Activated CD4-positive, alpha-beta memory T cell treated with anti-CD3 and anti-CD28 coated beads for 36 hours (primary cell): ENCODE measurements at regions of chr7 and their contacts with region 1.

Region 1: DNA sequence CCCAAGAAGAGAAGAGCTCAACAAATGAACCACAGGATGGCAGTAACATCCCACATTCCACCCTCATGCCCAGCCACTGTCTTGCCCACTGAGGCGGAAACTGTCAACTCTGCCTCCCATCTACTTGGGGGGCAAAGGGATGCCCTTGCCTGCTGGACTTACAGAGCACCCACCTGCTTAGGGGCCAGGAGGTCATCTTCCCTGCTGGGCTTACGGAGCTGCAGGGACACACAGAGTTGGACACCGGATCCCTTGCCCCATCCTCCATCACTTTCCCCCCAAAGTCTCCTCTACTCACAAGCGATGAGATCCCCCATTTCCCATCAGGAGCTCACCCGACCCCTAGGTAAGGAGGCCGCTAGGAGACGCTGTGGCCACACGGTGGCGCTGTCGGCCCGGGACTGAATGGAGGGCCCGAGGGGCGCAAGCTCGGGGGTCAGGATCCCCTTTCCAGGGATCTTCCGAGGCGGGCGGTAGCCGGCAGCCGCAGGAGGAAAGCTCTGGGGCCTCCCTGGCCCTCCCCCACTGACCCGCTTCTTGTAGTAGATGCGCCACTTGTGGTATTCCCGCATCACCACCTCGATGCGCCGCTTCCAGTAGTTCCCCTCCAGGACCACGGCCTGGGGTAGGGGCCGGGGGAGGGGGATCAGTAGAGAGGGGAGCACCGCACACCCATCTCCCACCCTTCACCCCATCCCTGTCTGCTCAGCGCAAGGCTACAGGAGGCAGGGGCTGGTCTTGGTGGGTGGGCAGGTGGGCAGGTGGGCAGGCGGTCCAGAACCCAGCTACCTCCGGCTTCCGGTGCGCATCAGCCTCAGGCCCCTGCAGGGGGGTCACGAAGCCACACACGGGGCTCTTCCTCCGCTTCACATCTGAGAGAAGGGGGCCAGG is 17.3 kb downstream of the MLXIPL start:
- DNase-seq: peak; percentile 64
- H3K4me3 Mint-ChIP-seq: no peak overlapping the region
- H3K27ac Mint-ChIP-seq: no peak overlapping the region
- H3K4me1 Mint-ChIP-seq: no peaks in the 10 kb centered on the region
- H3K27me3 Mint-ChIP-seq: peaks cover 19% of the 10 kb centered on the region

Region 2: GRCh38 chr7:73308665-73309214 is 298.3 kb before region 1 on chr7 and contains the start of gene NSUN5:
- CTCF ChIA-PET with region 1: no interaction called
- POLR2A ChIA-PET with region 1: no interaction called
- intact Hi-C with region 1: no loop called
- DNase-seq: peak; percentile 96
- H3K4me3 Mint-ChIP-seq: peak within 1 kb of the TSS; percentile 98
- H3K27ac Mint-ChIP-seq: peak within 1 kb of the TSS; percentile 88
- H3K4me1 Mint-ChIP-seq: peaks cover 26% of the 10 kb centered on the region
- H3K27me3 Mint-ChIP-seq: no peaks in the 10 kb centered on the region
- total RNA-seq, gene NSUN5: 51.2 to 55.5 TPM

Region 3: DNA sequence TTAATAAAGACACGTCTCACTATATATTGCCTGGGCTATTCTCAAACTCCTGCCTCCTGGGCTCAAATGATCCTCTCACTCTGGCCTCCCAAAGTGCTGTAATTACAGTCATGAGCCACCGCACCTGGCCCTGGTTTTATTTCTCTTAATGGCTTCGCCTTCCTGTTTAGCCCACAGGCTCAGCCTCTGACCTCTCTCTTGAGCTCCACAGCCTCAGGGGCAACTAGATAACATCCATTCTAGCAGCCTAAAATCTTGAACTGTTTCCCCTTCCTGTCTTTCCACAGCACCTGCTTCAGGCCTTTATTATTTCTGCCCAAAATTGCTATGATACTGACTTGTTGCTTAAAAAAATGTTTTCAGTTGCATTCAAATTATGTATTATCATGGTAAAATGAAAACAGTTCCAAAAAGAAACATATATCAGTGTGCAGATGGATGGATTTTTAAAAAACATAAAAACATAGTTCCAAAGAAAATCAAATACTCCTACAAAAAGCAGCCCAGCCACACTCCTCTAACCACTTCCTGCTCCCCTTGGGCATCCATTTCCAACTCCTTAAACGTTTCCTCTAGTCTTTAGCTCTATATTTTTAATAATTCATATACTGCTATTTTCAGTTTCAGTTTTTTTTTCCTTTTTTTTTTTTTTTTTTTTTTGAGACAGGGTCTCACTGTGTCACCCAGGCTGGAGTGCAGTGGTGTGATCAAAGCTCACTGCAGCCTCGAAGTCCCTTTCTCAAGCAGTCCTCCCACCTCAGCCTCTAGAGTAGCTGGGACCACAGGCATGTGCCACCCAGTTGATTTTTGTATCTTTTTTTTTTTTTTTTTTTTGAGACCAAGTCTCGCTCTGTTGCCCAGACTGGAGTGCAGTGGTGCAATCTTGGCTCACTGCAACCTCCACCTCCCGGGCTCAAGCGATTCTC is 79.9 kb before region 1 on chr7:
- CTCF ChIA-PET with region 1: no interaction called
- POLR2A ChIA-PET with region 1: no interaction called
- intact Hi-C with region 1: no loop called
- DNase-seq: no peak
- H3K4me3 Mint-ChIP-seq: no peak overlapping the region
- H3K27ac Mint-ChIP-seq: peak overlapping the region; percentile 71
- H3K4me1 Mint-ChIP-seq: peaks cover 31% of the 10 kb centered on the region
- H3K27me3 Mint-ChIP-seq: no peaks in the 10 kb centered on the region

Region 4: DNA sequence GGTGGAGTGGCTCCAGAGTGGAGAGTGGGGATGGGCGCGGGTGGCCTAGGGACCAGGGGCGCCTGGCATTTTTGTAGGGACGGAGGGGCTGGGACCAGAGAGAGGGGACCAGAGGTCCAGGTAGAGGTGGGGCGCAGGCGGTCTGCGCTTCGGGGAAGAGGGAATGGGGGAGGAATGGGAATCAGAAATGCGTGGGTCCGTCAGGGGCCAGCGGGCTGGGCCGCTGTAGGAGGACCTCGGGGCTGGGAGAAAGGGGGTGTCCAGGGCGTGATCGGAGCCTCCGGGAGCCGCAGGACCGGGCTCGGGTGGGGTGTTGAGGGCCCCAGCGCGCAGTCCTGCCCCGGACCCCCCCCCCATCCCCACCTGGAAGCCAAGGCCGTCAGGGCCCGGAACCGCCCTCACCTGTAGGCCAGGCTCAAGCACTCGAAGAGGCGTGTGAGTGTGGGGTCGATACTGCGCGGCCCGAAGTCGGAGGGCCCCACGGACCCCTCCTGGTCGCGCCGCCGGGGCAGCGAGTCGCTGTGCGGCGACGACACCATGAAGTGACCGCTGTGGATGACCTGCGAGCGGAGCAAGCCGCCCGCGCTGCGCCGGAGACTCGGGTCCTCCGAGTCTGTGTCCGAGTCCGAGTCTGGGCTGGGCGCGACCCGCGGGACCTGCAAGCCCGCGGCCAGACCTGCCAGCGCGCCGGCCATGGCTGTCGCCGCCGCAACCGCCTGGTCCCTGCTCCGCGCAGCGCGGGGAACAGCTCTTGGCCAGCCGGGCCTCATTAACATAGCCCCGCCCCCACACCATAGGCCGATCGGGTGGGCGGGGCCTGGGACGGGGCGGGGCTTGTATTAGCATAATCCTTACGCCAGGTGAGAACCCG is 17.0 kb after region 1 on chr7 and contains the start of gene MLXIPL:
- CTCF ChIA-PET with region 1: interaction called, 14 read pairs
- POLR2A ChIA-PET with region 1: no interaction called
- intact Hi-C with region 1: no loop called
- DNase-seq: peak; percentile 74
- H3K4me3 Mint-ChIP-seq: no peak within 1 kb of the TSS
- H3K27ac Mint-ChIP-seq: no peak within 1 kb of the TSS
- H3K4me1 Mint-ChIP-seq: peaks cover 6% of the 10 kb centered on the region
- H3K27me3 Mint-ChIP-seq: peaks cover 37% of the 10 kb centered on the region
- total RNA-seq, gene MLXIPL: not detected

Region 5: DNA sequence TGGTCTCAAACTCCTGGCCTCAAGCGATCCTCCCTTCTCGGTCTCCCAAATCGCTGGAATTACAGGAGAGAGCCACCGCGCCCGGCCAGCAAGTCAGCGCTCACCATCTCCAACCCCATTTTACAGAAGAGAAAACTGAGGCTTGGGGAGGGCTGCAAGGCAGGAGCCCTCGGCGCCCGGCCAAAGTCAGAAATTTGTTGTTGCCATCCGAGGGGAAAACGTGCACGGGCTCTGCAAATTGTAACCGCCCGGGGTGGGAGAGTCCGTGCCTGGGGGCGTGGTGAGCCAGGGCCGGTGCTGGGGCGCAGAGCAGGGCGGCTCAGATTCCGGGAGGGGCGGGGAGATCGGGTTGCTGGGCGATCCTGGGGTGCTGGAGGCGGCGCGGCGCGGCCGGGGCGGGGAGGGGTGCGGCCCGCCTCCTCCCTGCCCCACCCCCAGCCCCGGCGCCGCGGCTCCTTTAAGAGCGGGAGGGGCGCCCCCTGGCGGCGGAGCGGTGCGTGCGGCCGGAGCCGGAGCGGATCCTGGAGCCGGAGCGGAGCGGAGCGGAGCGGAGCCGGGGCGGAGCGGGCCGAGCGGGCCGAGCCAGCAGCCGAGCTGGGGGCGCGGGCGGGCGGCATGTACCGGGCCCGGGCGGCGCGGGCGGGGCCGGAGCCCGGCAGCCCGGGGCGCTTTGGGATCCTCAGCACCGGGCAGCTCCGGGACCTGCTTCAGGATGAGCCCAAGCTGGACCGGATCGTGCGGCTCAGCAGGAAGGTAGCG is 60.5 kb after region 1 on chr7 and contains the start of gene VPS37D:
- CTCF ChIA-PET with region 1: interaction called, 29 read pairs
- POLR2A ChIA-PET with region 1: no interaction called
- intact Hi-C with region 1: loop called (anchors 1 kb)
- DNase-seq: peak; percentile 92
- H3K4me3 Mint-ChIP-seq: peak within 1 kb of the TSS; percentile 62
- H3K27ac Mint-ChIP-seq: no peak within 1 kb of the TSS
- H3K4me1 Mint-ChIP-seq: peaks cover 3% of the 10 kb centered on the region
- H3K27me3 Mint-ChIP-seq: peaks cover 36% of the 10 kb centered on the region
- total RNA-seq, gene VPS37D: 0.22 to 0.26 TPM

Region 6: DNA sequence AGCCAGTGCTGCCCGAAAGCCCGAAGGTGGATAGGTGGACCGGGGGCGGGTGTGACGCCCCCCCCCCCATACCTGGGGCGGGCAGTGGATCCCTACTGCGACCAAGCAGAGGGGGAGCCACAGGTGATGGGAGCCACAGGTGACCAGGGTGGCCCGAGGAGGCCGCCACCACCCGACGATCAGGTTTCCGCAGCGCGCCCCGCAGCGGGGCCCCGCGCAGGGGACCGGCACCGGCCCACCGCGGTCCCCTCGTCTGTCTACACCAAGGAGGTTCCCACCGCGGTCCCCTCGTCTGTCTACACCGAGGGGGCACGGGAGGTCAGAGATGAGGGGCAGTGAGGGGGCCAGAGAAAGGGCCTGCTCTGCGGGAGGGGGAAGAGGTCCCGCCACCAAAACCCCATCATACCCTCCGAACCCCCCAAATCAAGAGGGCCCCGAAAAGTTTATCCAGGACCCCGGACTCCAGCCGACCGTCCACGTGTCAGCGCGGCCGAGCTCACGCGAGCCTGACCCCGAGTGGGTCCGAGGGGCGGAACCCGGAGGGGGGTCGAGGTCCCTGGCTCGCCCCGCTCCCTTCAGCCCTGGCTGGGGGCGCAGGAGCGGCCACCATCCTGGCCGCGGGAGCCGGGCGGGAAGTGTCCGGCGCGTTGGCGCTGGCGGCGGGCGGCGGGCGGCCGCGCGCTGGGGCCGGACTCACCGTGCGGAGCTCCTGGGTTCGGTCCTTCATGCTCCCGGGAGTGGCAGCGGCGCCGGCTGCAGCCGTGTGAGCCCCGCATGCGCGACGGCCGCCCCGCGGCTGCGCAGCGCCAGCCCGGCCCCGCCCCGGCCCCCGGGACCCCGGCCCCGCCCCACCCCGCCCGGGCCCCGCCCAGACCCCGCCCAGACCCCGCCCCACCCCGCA is 112.1 kb after region 1 on chr7 and contains the start of gene STX1A:
- CTCF ChIA-PET with region 1: interaction called, 94 read pairs
- POLR2A ChIA-PET with region 1: no interaction called
- intact Hi-C with region 1: no loop called
- DNase-seq: peak; percentile 81
- H3K4me3 Mint-ChIP-seq: peak within 1 kb of the TSS; percentile 70
- H3K27ac Mint-ChIP-seq: peak within 1 kb of the TSS; percentile 62
- H3K4me1 Mint-ChIP-seq: peaks cover 34% of the 10 kb centered on the region
- H3K27me3 Mint-ChIP-seq: no peaks in the 10 kb centered on the region
- total RNA-seq, gene STX1A: 31.8 to 39.2 TPM

Region 7: GRCh38 chr7:73738612-73739374 is 131.7 kb after region 1 on chr7 and contains the start of gene ABHD11:
- CTCF ChIA-PET with region 1: interaction called, 109 read pairs
- POLR2A ChIA-PET with region 1: no interaction called
- intact Hi-C with region 1: no loop called
- DNase-seq: peak; percentile 99
- H3K4me3 Mint-ChIP-seq: peak within 1 kb of the TSS; percentile 91
- H3K27ac Mint-ChIP-seq: peak within 1 kb of the TSS; percentile 82
- H3K4me1 Mint-ChIP-seq: peaks cover 13% of the 10 kb centered on the region
- H3K27me3 Mint-ChIP-seq: no peaks in the 10 kb centered on the region
- total RNA-seq, gene ABHD11: 14.7 to 16.8 TPM

Region 8: GRCh38 chr7:73769992-73770859 is 163.2 kb after region 1 on chr7 and contains the start of gene CLDN3:
- CTCF ChIA-PET with region 1: no interaction called
- POLR2A ChIA-PET with region 1: no interaction called
- intact Hi-C with region 1: no loop called
- DNase-seq: peak; percentile 14
- H3K4me3 Mint-ChIP-seq: no peak within 1 kb of the TSS
- H3K27ac Mint-ChIP-seq: no peak within 1 kb of the TSS
- H3K4me1 Mint-ChIP-seq: peaks cover 9% of the 10 kb centered on the region
- H3K27me3 Mint-ChIP-seq: peaks cover 38% of the 10 kb centered on the region
- total RNA-seq, gene CLDN3: not detected